ENCODE measurements at regions of chrX and their contacts with region 1.

Region 1: DNA sequence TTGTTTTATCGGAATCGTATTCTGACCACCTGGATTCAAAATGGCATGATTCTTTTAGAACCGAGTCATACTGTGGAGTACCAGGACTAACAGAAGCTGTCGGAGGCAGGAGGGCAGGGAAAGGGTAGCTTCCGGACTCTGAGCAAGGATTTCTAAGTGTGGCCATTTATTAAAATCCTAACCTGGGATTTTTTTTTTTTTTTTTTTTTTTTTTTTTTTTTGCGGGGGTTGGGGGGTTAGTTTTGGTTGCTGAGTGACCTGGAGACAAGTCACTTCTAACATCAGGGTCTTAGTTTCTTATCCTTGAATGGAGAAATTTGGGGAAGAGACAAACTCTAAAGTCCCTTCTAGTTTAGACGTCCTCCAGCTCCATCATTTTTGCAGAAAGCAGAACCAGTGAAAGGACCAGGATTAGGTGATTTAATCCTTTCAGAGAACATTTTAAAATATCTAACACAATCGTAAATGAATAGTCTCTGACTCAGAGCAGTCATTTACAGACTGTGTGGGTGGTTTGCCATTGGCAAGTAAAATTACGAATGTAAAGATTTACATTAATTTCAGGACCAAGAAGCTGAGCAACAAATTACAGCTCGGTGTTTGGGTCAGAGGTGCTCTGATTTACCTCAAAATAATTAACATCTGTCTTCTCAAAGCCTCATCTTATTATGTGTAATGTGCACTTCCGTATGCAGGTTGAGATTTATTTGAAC is 7.3 kb downstream of the SLC25A5 start:
- DNase-seq: peak; percentile 52
- ATAC-seq: peak; percentile 68
- H3K4me3 ChIP-seq: peak overlapping the region; percentile 38; the same call in 1 of the 2 replicates
- H3K27ac ChIP-seq: no peak overlapping the region
- H3K4me1 ChIP-seq: peaks cover 15% of the 10 kb centered on the region
- H3K27me3 ChIP-seq: no peaks in the 10 kb centered on the region
- CTCF ChIP-seq: no peak

Region 2: GRCh38 chrX:119495734-119496726 is 20.5 kb after region 1 on chrX:
- CTCF ChIA-PET with region 1: interaction called, 17 read pairs
- POLR2A ChIA-PET with region 1: no interaction called
- intact Hi-C with region 1: no loop called
- DNase-seq: peak; percentile 23
- ATAC-seq: peak; percentile 69
- H3K4me3 ChIP-seq: no peak overlapping the region
- H3K27ac ChIP-seq: peak overlapping the region; percentile 38
- H3K4me1 ChIP-seq: peaks cover 26% of the 10 kb centered on the region
- H3K27me3 ChIP-seq: no peaks in the 10 kb centered on the region
- CTCF ChIP-seq: no peak

Region 3: DNA sequence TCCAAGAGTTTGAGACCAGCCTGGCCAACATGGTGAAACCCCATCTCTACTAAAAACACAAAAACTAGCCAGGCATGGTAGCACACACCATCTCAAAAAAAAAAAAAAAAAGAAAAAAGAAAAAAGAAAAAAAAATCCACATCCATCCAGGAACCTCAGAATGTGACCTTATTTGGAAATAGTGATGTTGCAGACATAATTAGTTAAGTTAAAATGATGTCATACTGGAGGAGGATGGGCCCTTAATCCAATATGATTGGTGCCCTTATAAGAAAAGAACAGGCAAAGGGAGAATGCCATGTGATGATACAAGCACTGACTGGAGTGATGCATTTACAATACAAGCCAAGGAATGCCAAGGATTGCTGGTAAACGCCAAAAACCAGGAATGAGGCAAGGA is 81.8 kb after region 1 on chrX:
- CTCF ChIA-PET with region 1: no interaction called
- POLR2A ChIA-PET with region 1: no interaction called
- intact Hi-C with region 1: no loop called
- DNase-seq: no peak
- ATAC-seq: no peak
- H3K4me3 ChIP-seq: no peak overlapping the region
- H3K27ac ChIP-seq: no peak overlapping the region
- H3K4me1 ChIP-seq: peaks cover 1% of the 10 kb centered on the region; the same call in 1 of the 2 replicates
- H3K27me3 ChIP-seq: no peaks in the 10 kb centered on the region
- CTCF ChIP-seq: no peak

Measured in PC-3 (cell line).